CD8-positive, alpha-beta T cell (primary cell): ENCODE measurements at regions of chr9 and their contacts with region 1.

Region 1: DNA sequence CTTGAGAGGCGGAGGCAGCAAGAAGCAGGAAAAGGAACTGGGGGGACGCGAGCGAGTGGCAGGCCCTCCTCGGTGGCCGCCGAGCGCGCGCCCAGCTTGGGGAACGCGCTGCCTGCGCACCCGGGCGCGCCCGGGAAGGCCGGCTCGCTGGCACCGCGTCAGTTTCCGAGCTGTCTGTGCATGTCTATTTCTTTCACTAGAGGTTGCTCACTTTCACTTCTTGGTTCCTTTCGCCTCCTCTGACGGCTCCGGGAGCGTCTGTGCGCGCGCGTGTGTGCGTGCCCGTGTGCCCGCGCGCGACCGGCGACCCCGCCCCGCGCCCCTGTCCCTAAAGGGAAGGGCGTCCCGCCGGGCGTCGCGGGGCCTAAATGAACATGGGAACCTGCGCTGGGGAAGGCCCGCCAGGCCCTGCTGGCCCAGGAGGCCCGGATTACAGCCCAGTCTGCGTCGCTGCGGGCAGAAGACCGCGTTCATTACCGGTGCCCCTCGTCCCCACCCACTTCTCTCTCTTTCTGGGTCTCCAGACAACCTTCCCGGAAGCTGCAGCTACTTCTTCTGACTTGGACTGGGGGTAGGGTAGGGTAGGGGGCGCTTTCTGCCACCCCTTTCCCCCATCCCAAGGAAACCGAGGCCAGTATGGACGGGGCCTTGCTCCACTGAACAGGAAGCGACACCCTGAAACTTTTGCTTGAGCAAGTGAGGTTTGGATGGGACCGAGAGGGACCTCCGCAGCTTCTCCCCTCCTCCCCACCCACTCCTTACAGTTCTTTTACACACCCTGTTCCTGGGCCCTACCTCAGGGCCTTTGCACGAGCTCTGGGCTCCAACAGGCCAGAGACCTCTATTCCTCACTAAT is 205.7 kb upstream of the IER5L start:
- DNase-seq: peak; percentile 46 to 90 (median 77)
- ATAC-seq: peak; percentile 90
- H3K4me3 ChIP-seq: peak overlapping the region; percentile 46 to 64
- H3K4me3 Mint-ChIP-seq: peak overlapping the region; percentile 84
- H3K27ac ChIP-seq: peak overlapping the region; percentile 77 to 90
- H3K27ac Mint-ChIP-seq: peak overlapping the region; percentile 94
- H3K4me1 ChIP-seq: peaks cover 18% of the 10 kb centered on the region
- H3K4me1 Mint-ChIP-seq: peaks cover 15% of the 10 kb centered on the region
- H3K27me3 ChIP-seq: no peaks in the 10 kb centered on the region
- H3K27me3 Mint-ChIP-seq: no peaks in the 10 kb centered on the region
- CTCF ChIP-seq: peak; percentile 27

Region 2: DNA sequence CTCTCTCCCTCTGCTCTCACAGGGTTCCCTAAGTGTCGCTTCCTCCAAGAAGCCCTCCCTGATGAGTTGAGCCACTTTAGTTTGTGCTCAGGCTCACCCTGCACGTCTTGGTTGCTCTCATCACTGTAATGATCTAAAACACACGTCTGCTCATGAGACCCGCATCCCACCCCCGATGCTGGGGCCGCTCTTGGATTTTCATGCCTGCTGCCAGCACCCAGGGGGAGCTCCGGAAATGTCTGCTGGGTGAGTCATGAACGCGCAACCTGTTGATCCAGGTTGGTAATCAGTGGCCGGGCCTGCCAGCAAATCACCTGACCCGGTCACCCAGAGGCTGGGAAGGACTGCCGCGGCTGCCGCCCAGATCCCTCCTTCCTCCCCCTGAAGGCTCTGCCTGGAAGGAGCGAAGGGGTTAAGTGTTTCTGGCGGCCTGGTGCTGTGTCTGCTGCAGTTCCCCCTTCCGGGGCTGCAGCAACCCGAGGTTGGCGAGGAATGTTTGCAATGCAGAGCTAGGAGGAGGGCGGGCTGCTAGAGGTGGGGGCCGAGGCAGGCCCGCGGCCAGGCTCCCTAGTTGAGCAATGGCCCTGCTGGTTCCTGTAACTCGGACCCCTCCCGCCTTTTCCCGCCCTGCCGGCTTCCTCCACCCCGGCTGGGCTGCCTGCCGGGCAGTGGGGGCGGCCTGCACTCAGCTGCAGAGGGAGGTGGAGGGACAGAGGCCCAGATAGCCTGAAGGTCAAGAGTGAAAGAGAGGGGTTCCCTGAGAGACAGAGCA is 49.6 kb before region 1 on chr9:
- CTCF ChIA-PET with region 1: no interaction called
- POLR2A ChIA-PET with region 1: no interaction called
- intact Hi-C with region 1: loop called in 1 of 2 experiments (anchors 1 kb)
- DNase-seq: peak in 6 of 9 experiments; percentile 11 to 56 (median 42)
- ATAC-seq: peak; percentile 50
- H3K4me3 ChIP-seq: peak overlapping the region; percentile 12 to 48
- H3K4me3 Mint-ChIP-seq: peak overlapping the region; percentile 69
- H3K27ac ChIP-seq: no peak overlapping the region
- H3K27ac Mint-ChIP-seq: peak overlapping the region; percentile 69
- H3K4me1 ChIP-seq: peaks cover 36% of the 10 kb centered on the region
- H3K4me1 Mint-ChIP-seq: peaks cover 31% of the 10 kb centered on the region
- H3K27me3 ChIP-seq: peaks cover 0 to 10% of the 10 kb centered on the region in 2 experiments
- H3K27me3 Mint-ChIP-seq: no peaks in the 10 kb centered on the region
- CTCF ChIP-seq: no peak

Region 3: GRCh38 chr9:129368434-129368978 is 15.3 kb before region 1 on chr9:
- CTCF ChIA-PET with region 1: interaction called, 4 read pairs
- POLR2A ChIA-PET with region 1: interaction called, 10 read pairs
- intact Hi-C with region 1: no loop called
- DNase-seq: no peak
- ATAC-seq: no peak
- H3K4me3 ChIP-seq: no peak overlapping the region
- H3K4me3 Mint-ChIP-seq: no peak overlapping the region
- H3K27ac ChIP-seq: no peak overlapping the region
- H3K27ac Mint-ChIP-seq: no peak overlapping the region
- H3K4me1 ChIP-seq: no peaks in the 10 kb centered on the region
- H3K4me1 Mint-ChIP-seq: no peaks in the 10 kb centered on the region
- H3K27me3 ChIP-seq: no peaks in the 10 kb centered on the region
- H3K27me3 Mint-ChIP-seq: no peaks in the 10 kb centered on the region
- CTCF ChIP-seq: no peak

Region 4: GRCh38 chr9:129487642-129488409 is 104.0 kb after region 1 on chr9:
- CTCF ChIA-PET with region 1: no interaction called
- POLR2A ChIA-PET with region 1: interaction called, 5 read pairs
- intact Hi-C with region 1: loop called in 1 of 2 experiments (anchors 5 kb)
- DNase-seq: peak in 3 of 9 experiments; percentile 64 to 80 (median 64)
- ATAC-seq: peak; percentile 14
- H3K4me3 ChIP-seq: peak overlapping the region; percentile 55 to 58
- H3K4me3 Mint-ChIP-seq: peak overlapping the region; percentile 80
- H3K27ac ChIP-seq: peak overlapping the region; percentile 72 to 83
- H3K27ac Mint-ChIP-seq: peak overlapping the region; percentile 92
- H3K4me1 ChIP-seq: peaks cover 56% of the 10 kb centered on the region
- H3K4me1 Mint-ChIP-seq: peaks cover 42% of the 10 kb centered on the region
- H3K27me3 ChIP-seq: no peaks in the 10 kb centered on the region
- H3K27me3 Mint-ChIP-seq: no peaks in the 10 kb centered on the region
- CTCF ChIP-seq: no peak